K562 (cell line): ENCODE measurements at regions of chr9 and their contacts with region 1.

Region 1: GRCh38 chr9:37929441-37929895 is 25.5 kb upstream of the SLC25A51 start:
- DNase-seq: no peak
- ATAC-seq: no peak
- H3K4me3 ChIP-seq: no peak overlapping the region
- H3K27ac ChIP-seq: no peak overlapping the region
- H3K4me1 ChIP-seq: peaks cover 0 to 11% of the 10 kb centered on the region in 2 experiments; a peak in 3 of 5 replicates
- H3K27me3 ChIP-seq: no peaks in the 10 kb centered on the region
- CTCF ChIP-seq: no peak
- EP300 ChIP-seq: no peak
- POLR2A ChIP-seq: no peak
- RAD21 ChIP-seq: no peak

Region 2: GRCh38 chr9:38008168-38009034 is 78.9 kb after region 1 on chr9:
- CTCF ChIA-PET with region 1: no interaction called
- POLR2A ChIA-PET with region 1: no interaction called
- in situ Hi-C with region 1: no loop called
- intact Hi-C with region 1: no loop called
- DNase-seq: peak; percentile 53 to 75 (median 68)
- ATAC-seq: peak; percentile 63
- H3K4me3 ChIP-seq: no peak overlapping the region
- H3K27ac ChIP-seq: no peak overlapping the region; the same call in 2 of the 3 replicates
- H3K4me1 ChIP-seq: peaks cover 15 to 17% of the 10 kb centered on the region in 2 experiments
- H3K27me3 ChIP-seq: no peaks in the 10 kb centered on the region
- CTCF ChIP-seq: no peak
- EP300 ChIP-seq: no peak
- POLR2A ChIP-seq: no peak
- RAD21 ChIP-seq: no peak

Region 3: GRCh38 chr9:38408719-38409118 is 479.3 kb after region 1 on chr9:
- CTCF ChIA-PET with region 1: no interaction called
- POLR2A ChIA-PET with region 1: no interaction called
- in situ Hi-C with region 1: no loop called
- intact Hi-C with region 1: loop called (anchors 5 kb)
- DNase-seq: no peak
- ATAC-seq: no peak
- H3K4me3 ChIP-seq: no peak overlapping the region
- H3K27ac ChIP-seq: no peak overlapping the region
- H3K4me1 ChIP-seq: no peaks in the 10 kb centered on the region
- H3K27me3 ChIP-seq: peaks cover 72 to 73% of the 10 kb centered on the region in 2 experiments
- CTCF ChIP-seq: no peak
- EP300 ChIP-seq: no peak
- POLR2A ChIP-seq: no peak
- RAD21 ChIP-seq: no peak